Heart left ventricle (tissue), 16 donors: ENCODE measurements at regions of chr5 and their contacts with region 1.

Region 1: DNA sequence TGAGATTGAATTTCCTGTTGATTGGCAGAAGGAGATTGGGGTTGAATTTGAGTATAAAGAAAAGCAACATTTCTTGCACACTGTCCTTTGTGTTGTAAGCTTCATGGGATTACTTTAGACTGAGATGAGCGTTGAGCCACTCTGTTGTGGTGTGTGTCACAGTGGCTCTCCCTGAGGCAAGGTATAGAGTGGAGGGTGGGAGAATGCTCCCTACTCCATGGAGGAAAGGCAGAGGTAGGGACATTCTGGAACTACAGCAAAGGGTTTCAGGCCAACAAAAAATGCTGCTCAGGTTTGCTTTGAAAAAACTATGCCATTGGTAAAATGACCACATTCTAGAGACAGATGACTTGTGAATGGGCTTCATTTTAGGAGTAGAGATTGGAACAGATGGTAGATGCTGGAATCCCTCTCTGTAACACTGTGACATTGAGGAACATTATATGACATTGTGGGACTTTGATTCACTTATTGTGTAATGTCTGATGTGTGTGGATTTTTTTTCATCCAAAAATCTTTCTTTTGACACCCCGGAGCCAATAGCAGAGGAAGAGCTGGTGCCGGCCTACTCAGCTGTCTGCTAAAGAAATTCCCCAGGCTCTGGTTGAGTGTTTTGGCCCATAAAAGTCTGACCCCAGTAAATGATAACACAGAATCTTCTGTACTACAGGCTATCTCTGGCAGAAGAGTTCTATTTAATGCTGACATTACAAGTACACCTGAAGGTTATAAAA is 6.2 kb upstream of the CEP120 start:
- DNase-seq: no peak
- ATAC-seq: no peak
- H3K4me3 ChIP-seq: no peak overlapping the region
- H3K27ac ChIP-seq: peak overlapping the region in 1 of 12 donors; percentile 33
- H3K4me1 ChIP-seq: peaks cover 0 to 8% (median 0%) of the 10 kb centered on the region in 12 donors
- H3K27me3 ChIP-seq: no peaks in the 10 kb centered on the region
- CTCF ChIP-seq: no peak
- POLR2A ChIP-seq: no peak

Region 2: GRCh38 chr5:123605822-123606221 is 176.4 kb after region 1 on chr5:
- intact Hi-C with region 1: loop called in 5 of 10 experiments (anchors 5 kb)
- DNase-seq: no peak
- ATAC-seq: no peak
- H3K4me3 ChIP-seq: no peak overlapping the region
- H3K27ac ChIP-seq: no peak overlapping the region
- H3K4me1 ChIP-seq: peaks cover 0 to 5% (median 0%) of the 10 kb centered on the region in 12 donors
- H3K27me3 ChIP-seq: no peaks in the 10 kb centered on the region
- CTCF ChIP-seq: no peak
- POLR2A ChIP-seq: no peak